Activated naive CD4-positive, alpha-beta T cell treated with anti-CD3 and anti-CD28 coated beads for 36 hours (primary cell): ENCODE measurements at regions of chr6 and their contacts with region 1.

Region 1: GRCh38 chr6:43386492-43386891 is 17.0 kb upstream of the ZNF318 start:
- DNase-seq: no peak
- H3K4me3 Mint-ChIP-seq: no peak overlapping the region
- H3K27ac Mint-ChIP-seq: no peak overlapping the region
- H3K4me1 Mint-ChIP-seq: peaks cover 50% of the 10 kb centered on the region
- H3K27me3 Mint-ChIP-seq: peaks cover 3% of the 10 kb centered on the region

Region 2: DNA sequence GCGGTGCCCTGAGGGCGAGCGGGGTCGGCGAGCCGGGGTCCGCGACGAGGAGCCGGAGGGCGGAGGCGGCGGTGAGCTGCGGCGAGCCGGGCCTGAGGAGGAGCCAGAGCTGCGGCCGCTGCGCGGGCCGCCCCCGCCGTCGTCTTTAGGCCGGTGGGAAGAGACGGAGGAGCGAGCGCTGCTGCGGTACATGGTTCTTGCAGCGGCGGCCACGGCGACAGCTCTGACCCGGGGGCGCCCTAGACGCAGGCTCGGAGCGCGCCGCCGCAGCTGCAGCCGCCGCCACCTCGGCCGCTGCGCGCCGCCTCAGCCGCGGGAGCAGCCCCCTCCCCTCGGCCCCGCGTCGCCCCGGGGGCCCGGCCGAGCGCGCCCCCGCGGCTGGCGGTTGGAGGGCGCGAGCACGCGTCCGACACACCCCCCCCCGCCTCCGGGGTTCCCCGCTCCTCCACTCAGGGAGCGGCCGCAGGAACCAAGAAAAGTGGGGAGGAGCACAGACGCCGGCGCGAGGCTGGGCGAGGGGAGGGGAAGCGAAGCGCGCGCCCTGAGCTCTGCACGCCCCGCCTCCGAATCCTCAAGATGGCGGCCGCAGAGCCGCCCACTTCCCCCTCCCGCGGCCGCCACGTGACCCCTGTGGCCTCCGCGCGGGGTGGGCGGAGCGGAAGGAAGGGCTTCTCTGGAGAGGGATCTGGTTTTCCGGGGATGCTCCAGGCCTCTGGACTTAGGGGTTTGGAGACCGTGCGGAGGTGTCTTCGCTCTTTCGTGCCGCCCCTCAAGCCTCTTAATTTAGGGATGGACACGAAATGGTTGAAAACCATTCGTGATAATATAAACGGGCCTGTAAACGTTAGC is 17.1 kb before region 1 on chr6 and contains the start of gene ZNF318:
- CTCF ChIA-PET with region 1: interaction called, 5 read pairs
- intact Hi-C with region 1: loop called (anchors 1 kb)
- DNase-seq: peak; percentile 95
- H3K4me3 Mint-ChIP-seq: peak within 1 kb of the TSS; percentile 87
- H3K27ac Mint-ChIP-seq: peak within 1 kb of the TSS; percentile 90
- H3K4me1 Mint-ChIP-seq: peaks cover 36% of the 10 kb centered on the region
- H3K27me3 Mint-ChIP-seq: no peaks in the 10 kb centered on the region
- total RNA-seq, gene ZNF318: 9.3 to 9.9 TPM

Region 3: GRCh38 chr6:43570876-43571441 is 184.5 kb after region 1 on chr6:
- CTCF ChIA-PET with region 1: no interaction called
- intact Hi-C with region 1: loop called (anchors 1 kb)
- DNase-seq: peak; percentile 34
- H3K4me3 Mint-ChIP-seq: no peak overlapping the region
- H3K27ac Mint-ChIP-seq: peak overlapping the region; percentile 89
- H3K4me1 Mint-ChIP-seq: peaks cover 36% of the 10 kb centered on the region
- H3K27me3 Mint-ChIP-seq: no peaks in the 10 kb centered on the region

Region 4: GRCh38 chr6:43635387-43636307 is 249.2 kb after region 1 on chr6 and contains the start of gene MAD2L1BP:
- CTCF ChIA-PET with region 1: no interaction called
- intact Hi-C with region 1: loop called (anchors 5 kb)
- DNase-seq: peak; percentile 93
- H3K4me3 Mint-ChIP-seq: peak within 1 kb of the TSS; percentile 91
- H3K27ac Mint-ChIP-seq: peak within 1 kb of the TSS; percentile 95
- H3K4me1 Mint-ChIP-seq: peaks cover 46% of the 10 kb centered on the region
- H3K27me3 Mint-ChIP-seq: no peaks in the 10 kb centered on the region
- total RNA-seq, gene MAD2L1BP: 19.8 to 22.7 TPM

Region 5: GRCh38 chr6:44951253-44951747 is 1564.8 kb after region 1 on chr6:
- CTCF ChIA-PET with region 1: no interaction called
- intact Hi-C with region 1: no loop called
- DNase-seq: no peak
- H3K4me3 Mint-ChIP-seq: no peak overlapping the region
- H3K27ac Mint-ChIP-seq: no peak overlapping the region
- H3K4me1 Mint-ChIP-seq: peaks cover 16% of the 10 kb centered on the region
- H3K27me3 Mint-ChIP-seq: no peaks in the 10 kb centered on the region